ENCODE measurements at regions of chr4 and their contacts with region 1.

Region 1: DNA sequence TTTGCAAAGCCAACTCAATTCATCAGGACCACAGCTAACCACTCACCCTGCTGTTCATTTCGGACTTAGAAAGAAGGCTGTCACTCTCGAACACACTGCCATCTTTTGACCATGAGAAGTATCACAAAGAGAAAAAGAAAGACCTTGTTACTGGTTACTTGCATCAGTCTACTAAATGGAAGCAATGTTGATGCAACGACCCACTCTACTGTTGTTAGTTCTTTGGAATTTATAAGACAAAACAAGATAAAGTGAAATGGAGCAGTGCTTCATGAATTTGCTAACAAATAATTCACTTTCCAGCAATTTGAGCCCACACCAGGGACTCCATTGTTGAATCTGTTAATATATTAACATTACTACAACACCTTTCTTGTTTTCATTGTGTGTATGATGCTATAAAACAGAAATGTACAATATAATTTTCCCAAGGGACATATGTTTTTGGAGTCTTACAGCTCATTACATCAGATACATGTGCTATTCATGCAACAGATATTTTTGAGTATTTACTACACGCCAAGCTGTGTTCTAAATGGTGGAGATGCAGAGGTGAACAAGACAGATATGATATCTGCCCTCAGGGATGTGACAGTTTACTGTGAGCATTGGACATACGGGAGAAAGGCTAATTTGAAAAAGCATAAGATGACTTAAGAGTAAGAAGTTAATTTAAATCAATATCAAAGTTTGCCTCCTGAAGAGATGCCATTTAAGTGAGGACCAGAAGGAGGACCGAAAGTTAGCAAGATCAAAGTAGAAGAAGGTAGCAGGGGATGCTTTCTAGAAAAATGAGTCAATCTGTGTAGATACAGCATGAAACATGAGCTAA is 87.2 kb downstream of the AREG start:
- DNase-seq: peak; percentile 91
- H3K4me3 Mint-ChIP-seq: no peak overlapping the region
- H3K27ac Mint-ChIP-seq: peak overlapping the region; percentile 80
- H3K4me1 Mint-ChIP-seq: peaks cover 20% of the 10 kb centered on the region
- H3K27me3 Mint-ChIP-seq: no peaks in the 10 kb centered on the region
- CTCF ChIP-seq: peak; percentile 77

Region 2: DNA sequence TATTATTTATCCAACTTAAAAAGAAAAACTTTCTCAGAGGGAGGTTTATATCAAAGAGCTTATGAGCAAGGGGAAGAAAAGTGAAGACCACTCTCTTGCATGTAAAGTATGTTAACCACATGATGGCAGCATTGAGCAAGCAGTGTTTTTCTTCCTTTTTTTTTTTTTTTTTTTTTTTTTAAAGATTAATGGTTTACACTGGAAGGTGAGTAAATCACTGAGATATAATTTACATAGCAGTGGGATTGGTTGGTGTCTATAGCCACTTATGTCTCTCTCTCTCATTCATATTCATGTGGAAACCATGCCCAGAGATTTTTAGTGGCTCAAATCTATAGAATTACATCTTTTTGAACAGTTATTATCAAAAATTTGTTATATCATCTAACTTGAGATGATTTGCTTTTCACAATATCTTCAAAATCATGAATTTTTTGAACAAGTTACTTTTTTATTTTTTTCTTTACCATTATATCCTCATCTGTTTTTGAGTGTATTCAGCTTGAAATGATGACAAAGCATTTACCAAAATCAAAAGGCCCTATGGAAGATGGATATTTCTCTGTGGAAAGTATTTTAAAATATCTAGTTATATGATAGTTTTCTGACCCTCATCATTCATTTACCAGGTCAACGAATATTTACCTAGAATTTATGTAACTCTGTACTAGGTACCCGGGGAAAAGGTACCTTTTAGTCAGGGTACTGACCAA is 342.7 kb before region 1 on chr4:
- CTCF ChIA-PET with region 1: no interaction called
- POLR2A ChIA-PET with region 1: no interaction called
- intact Hi-C with region 1: loop called (anchors 10 kb)
- DNase-seq: peak; percentile 71
- H3K4me3 Mint-ChIP-seq: no peak overlapping the region
- H3K27ac Mint-ChIP-seq: no peak overlapping the region
- H3K4me1 Mint-ChIP-seq: no peaks in the 10 kb centered on the region
- H3K27me3 Mint-ChIP-seq: no peaks in the 10 kb centered on the region
- CTCF ChIP-seq: peak; percentile 61

Region 3: DNA sequence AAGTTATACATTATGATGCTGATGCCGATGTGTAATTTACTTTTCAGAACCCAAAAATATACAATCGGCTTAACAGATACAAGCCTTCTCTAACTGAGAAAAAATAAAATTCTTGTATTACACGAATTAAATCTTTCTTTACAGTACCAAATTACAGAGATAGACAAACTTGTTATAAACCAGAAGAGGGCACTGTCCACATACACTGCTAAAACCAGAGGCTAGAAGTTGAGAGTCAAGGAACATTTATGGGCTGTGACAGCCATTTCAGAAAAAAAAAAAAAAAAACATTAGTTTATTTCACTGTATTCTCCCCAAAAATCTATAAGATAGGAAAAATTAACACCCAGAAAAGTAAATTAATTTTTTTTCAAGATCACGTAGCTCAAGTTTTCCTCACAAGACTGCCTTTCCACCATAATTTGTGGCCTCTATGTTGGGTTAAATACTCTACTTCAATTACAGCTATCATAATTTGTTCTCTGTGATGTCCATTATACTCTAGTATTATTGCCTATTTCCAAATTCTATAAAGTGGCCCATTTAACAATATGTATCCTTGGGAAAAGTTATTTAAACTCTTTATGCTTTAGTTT is 155.2 kb before region 1 on chr4:
- CTCF ChIA-PET with region 1: interaction called, 148 read pairs
- POLR2A ChIA-PET with region 1: interaction called, 72 read pairs
- intact Hi-C with region 1: loop called (anchors 1 kb)
- DNase-seq: peak; percentile 79
- H3K4me3 Mint-ChIP-seq: peak overlapping the region; percentile 71
- H3K27ac Mint-ChIP-seq: peak overlapping the region; percentile 97
- H3K4me1 Mint-ChIP-seq: peaks cover 20% of the 10 kb centered on the region
- H3K27me3 Mint-ChIP-seq: no peaks in the 10 kb centered on the region
- CTCF ChIP-seq: peak; percentile 71

Region 4: DNA sequence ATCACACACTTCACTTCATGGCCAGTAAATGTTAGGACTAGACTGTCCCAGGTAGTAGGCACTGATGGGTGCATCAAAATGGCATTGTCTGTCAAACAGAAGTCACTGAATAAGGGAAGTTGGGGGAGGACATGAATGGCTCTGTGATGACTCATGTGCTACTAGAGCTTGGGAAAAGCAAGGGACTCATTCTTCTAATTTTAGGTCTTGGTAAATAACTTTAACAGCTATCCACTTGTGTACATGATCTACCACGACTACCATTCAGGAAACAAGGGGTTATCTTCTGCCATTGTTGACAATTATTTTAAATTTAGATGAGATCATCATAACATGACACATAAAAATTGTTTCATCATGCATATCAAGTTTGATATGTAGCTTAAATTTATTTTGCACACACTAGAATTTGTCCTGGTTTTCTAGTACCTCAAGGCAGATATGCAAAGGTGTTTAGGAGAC is 80.9 kb before region 1 on chr4:
- CTCF ChIA-PET with region 1: interaction called, 47 read pairs
- POLR2A ChIA-PET with region 1: interaction called, 34 read pairs
- intact Hi-C with region 1: loop called (anchors 1 kb)
- DNase-seq: peak; percentile 85
- H3K4me3 Mint-ChIP-seq: peak overlapping the region; percentile 95
- H3K27ac Mint-ChIP-seq: peak overlapping the region; percentile 37
- H3K4me1 Mint-ChIP-seq: peaks cover 32% of the 10 kb centered on the region
- H3K27me3 Mint-ChIP-seq: no peaks in the 10 kb centered on the region
- CTCF ChIP-seq: no peak

Region 5: DNA sequence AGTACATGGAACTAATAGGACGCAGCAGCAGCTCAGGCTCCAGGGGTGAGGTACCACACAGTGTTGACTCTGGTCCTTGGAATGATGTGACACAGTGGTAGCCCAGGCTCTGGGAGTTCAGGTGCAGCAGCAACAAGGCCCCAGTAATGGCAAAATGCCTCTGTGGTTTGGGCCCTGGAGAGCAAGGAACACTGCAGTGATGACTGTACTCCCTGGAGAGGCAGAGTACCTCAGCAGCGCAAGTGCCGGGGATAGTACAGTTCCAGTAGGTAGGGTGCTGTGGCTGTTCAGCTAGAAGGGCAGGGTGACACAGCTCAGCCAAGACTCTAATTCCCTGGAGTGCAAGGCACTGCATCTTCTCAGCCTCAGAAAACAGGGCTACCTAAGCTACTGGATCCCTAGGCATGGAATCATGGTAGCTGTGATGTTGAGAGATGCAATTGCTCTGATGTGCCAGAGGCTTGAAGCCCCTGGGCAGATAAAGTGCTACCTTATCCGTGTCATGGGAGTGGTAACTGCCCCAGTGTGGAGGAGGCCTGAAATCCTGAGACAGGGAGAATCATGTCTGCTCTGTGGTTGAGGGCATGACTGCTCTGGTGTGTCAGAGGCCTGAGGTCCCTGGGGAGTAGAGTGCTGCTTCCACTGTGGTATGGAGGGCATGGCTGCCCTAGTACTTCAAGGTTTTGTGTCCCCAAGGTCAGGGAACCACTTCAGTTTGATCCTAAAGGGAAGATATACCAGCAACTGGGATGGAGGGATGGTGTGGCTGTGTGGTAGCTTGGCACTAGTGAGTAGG is 32.0 kb before region 1 on chr4:
- CTCF ChIA-PET with region 1: interaction called, 10 read pairs
- POLR2A ChIA-PET with region 1: interaction called, 5 read pairs
- intact Hi-C with region 1: no loop called
- DNase-seq: no peak
- H3K4me3 Mint-ChIP-seq: no peak overlapping the region
- H3K27ac Mint-ChIP-seq: no peak overlapping the region
- H3K4me1 Mint-ChIP-seq: peaks cover 20% of the 10 kb centered on the region
- H3K27me3 Mint-ChIP-seq: peaks cover 11% of the 10 kb centered on the region
- CTCF ChIP-seq: no peak

Region 6: DNA sequence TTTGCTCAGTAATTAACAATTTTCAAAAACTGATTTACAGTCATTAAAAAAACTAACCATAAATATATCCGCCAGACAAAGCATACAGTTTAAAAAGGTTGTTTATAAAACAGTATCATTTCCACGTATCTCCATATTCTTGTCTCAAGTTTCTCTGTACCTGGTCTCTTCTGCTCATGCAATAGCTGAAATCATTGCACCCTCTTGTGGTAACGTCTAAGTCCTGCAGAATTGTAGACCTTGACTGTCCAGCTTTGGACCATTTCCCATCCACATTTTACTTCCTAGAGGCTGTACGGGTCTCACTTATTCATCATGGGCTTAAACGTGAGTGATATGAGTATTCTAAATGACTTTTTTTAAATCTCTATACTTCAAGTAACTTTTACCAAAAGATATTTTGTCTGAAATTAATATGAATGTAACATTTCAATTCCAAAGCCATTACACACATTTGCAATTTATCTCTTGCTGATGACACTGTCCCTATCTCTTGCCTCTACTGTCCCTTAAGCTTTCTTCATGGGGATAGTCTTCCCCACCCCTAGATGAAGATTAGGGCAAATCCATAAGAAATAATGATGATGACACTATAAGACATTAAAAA is 143.6 kb after region 1 on chr4:
- CTCF ChIA-PET with region 1: interaction called, 171 read pairs
- POLR2A ChIA-PET with region 1: interaction called, 7 read pairs
- intact Hi-C with region 1: loop called (anchors 1 kb)
- DNase-seq: peak; percentile 80
- H3K4me3 Mint-ChIP-seq: peak overlapping the region; percentile 19
- H3K27ac Mint-ChIP-seq: no peak overlapping the region
- H3K4me1 Mint-ChIP-seq: peaks cover 9% of the 10 kb centered on the region
- H3K27me3 Mint-ChIP-seq: no peaks in the 10 kb centered on the region
- CTCF ChIP-seq: peak; percentile 80